HCT116 (cell line): ENCODE measurements at regions of chr11 and their contacts with region 1.

Region 1: GRCh38 chr11:124865921-124866583 is 820 bp downstream of the ROBO3 start:
- DNase-seq: no peak
- ATAC-seq: peak; percentile 69
- H3K4me3 ChIP-seq: no peak overlapping the region
- H3K27ac ChIP-seq: no peak overlapping the region
- H3K4me1 ChIP-seq: peaks cover 4 to 9% of the 10 kb centered on the region in 2 experiments; a peak in 2 of 4 replicates
- H3K27me3 ChIP-seq: peaks cover 34% of the 10 kb centered on the region; the same call in 1 of the 2 replicates
- CTCF ChIP-seq: peak; percentile 61 to 80 (median 71)
- POLR2A ChIP-seq: no peak
- RAD21 ChIP-seq: peak; percentile 46

Region 2: DNA sequence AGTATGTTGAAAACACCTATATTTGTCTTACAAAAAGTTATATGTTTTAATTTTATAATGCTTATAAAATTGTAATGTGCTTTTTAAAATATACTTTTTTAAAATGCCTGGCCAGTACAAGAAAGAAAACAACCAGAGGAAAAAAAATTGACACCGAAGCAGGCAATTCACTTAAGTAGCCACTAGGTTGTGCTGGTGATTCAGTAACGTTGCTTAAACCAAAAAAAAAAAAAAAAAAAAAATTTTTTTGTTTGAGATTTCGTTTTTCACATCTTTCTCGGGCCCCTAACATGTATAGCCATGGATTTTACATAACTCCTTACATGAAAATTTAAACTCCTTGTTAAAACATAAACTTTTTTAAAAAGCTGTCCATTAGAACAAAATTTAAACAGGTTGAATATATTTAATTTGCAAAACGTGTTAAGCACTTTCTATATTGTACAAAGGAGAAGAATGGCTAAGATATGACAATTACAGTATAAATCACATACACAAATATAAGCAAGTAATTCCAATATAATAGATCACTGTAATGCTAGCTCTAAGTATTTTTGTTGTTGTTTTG is 450.6 kb before region 1 on chr11:
- CTCF ChIA-PET with region 1: no interaction called
- POLR2A ChIA-PET with region 1: no interaction called
- RAD21 ChIA-PET with region 1: no interaction called
- intact Hi-C with region 1: loop called (anchors 10 kb)
- DNase-seq: peak; percentile 46
- ATAC-seq: no peak
- H3K4me3 ChIP-seq: no peak overlapping the region
- H3K27ac ChIP-seq: no peak overlapping the region
- H3K4me1 ChIP-seq: no peaks in the 10 kb centered on the region
- H3K27me3 ChIP-seq: peaks cover 57% of the 10 kb centered on the region
- CTCF ChIP-seq: peak; percentile 60 to 64 (median 63)
- POLR2A ChIP-seq: no peak
- RAD21 ChIP-seq: peak; percentile 74

Region 3: DNA sequence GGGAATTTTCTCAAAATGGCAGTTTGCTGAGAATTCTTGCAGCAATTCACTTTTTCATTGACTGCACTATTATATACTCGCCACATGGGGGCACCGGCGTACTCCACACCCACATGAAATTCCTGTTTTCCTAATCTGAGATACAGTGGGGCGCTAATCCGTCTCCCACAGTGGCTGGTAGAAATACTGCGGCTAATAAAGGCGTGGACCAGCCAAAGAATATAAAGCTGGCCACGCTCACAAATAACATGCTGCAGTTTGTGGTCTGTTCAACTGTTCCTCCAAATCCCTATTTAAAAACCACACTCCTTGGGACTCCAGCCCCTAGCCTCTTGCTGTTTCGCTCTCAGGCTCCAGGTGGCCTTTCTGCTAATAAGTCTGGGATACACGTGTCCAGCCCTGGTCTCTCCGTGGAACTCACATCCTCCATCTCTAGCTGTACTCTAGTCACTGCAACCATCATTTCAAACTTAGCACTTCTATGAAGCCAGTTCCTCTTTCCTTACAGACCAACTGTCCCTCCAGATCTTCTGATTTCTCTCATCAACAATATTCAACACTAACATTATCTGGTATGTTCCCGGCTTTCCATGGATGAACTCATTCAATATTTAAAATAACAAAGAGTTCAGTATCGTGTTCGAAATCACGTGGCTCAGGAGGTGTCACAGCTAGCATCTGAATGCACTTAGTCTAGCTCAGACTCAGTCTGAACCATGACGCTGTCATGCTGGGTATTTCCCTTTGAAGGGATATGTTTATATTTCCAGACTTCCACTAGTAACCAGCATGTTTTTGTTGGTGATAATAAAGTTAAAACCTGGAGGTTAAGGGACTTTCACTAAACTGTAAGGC is 221.4 kb before region 1 on chr11:
- CTCF ChIA-PET with region 1: no interaction called
- POLR2A ChIA-PET with region 1: no interaction called
- RAD21 ChIA-PET with region 1: no interaction called
- intact Hi-C with region 1: loop called (anchors 2 kb)
- DNase-seq: peak; percentile 50
- ATAC-seq: peak; percentile 91
- H3K4me3 ChIP-seq: peak overlapping the region in 1 of 2 experiments; percentile 34; a peak in 2 of 4 replicates
- H3K27ac ChIP-seq: no peak overlapping the region
- H3K4me1 ChIP-seq: peaks cover 0 to 7% of the 10 kb centered on the region in 2 experiments; a peak in 2 of 4 replicates
- H3K27me3 ChIP-seq: no peaks in the 10 kb centered on the region
- CTCF ChIP-seq: peak; percentile 65 to 97 (median 90)
- POLR2A ChIP-seq: no peak
- RAD21 ChIP-seq: peak; percentile 89

Region 4: GRCh38 chr11:124930799-124931198 is 64.7 kb after region 1 on chr11:
- CTCF ChIA-PET with region 1: no interaction called
- POLR2A ChIA-PET with region 1: no interaction called
- RAD21 ChIA-PET with region 1: no interaction called
- intact Hi-C with region 1: no loop called
- DNase-seq: no peak
- ATAC-seq: no peak
- H3K4me3 ChIP-seq: no peak overlapping the region
- H3K27ac ChIP-seq: no peak overlapping the region
- H3K4me1 ChIP-seq: peaks cover 0 to 5% of the 10 kb centered on the region in 2 experiments; a peak in 1 of 4 replicates
- H3K27me3 ChIP-seq: no peaks in the 10 kb centered on the region
- CTCF ChIP-seq: no peak
- POLR2A ChIP-seq: no peak
- RAD21 ChIP-seq: no peak